ENCODE measurements at regions of chr20 and their contacts with region 1.

Region 1: DNA sequence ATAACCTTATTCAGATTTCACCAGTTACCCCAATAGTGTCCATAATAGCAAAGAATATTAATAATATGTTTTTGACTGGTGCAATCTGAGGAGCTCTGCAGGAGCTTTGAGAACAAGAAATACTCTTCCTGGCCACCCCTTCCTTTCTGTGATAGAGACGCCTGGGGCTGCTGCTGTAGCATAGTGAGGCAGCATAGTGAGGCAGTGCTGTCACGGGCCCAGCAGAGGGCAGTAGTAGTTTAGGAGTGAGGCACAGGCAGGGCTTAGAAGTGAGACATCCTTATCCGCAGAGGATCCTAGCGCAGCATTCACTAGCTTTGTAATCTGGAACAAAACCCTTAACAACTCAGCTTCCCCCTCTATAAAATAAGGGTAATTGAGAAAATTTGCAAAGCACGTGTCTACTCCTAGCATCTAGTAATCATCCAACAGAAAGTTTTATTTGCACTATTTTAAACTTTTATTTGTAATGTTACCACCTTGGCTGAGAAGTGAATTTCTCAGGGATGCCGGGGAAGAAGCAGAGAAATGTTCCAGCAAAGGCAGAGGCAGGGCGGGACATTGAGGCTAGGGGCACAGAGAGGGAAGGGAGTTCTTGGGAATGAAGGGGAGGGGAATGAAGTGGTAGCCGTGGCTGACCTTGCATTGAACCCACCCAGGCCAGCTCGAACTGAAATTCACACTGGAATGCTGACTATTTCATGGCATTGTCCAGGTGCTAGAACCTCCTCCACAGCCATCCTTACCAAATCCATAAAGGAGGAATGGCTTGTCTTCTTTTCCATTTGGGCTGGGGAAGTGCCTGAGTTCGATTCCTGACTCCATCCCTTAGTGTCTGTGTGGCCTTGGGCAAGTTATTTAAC is 78.8 kb downstream of the CDS2 start:
- DNase-seq: peak; percentile 49 to 82
- ATAC-seq: peak; percentile 97 to 100 (median 100)
- H3K4me3 ChIP-seq: no peak overlapping the region
- H3K4me3 Mint-ChIP-seq: no peak overlapping the region
- H3K27ac ChIP-seq: no peak overlapping the region
- H3K27ac Mint-ChIP-seq: no peak overlapping the region
- H3K4me1 ChIP-seq: no peaks in the 10 kb centered on the region
- H3K4me1 Mint-ChIP-seq: peaks cover 0 to 4% of the 10 kb centered on the region in 2 donors
- H3K27me3 ChIP-seq: no peaks in the 10 kb centered on the region
- H3K27me3 Mint-ChIP-seq: no peaks in the 10 kb centered on the region
- CTCF ChIP-seq: peak; percentile 95

Region 2: GRCh38 chr20:3854462-3854871 is 1351.1 kb before region 1 on chr20:
- intact Hi-C with region 1: no loop called
- DNase-seq: no peak
- ATAC-seq: no peak
- H3K4me3 ChIP-seq: no peak overlapping the region
- H3K4me3 Mint-ChIP-seq: no peak overlapping the region
- H3K27ac ChIP-seq: no peak overlapping the region
- H3K27ac Mint-ChIP-seq: no peak overlapping the region
- H3K4me1 ChIP-seq: no peaks in the 10 kb centered on the region
- H3K4me1 Mint-ChIP-seq: peaks cover 15 to 16% of the 10 kb centered on the region in 2 donors
- H3K27me3 ChIP-seq: no peaks in the 10 kb centered on the region
- H3K27me3 Mint-ChIP-seq: no peaks in the 10 kb centered on the region
- CTCF ChIP-seq: no peak

Region 3: DNA sequence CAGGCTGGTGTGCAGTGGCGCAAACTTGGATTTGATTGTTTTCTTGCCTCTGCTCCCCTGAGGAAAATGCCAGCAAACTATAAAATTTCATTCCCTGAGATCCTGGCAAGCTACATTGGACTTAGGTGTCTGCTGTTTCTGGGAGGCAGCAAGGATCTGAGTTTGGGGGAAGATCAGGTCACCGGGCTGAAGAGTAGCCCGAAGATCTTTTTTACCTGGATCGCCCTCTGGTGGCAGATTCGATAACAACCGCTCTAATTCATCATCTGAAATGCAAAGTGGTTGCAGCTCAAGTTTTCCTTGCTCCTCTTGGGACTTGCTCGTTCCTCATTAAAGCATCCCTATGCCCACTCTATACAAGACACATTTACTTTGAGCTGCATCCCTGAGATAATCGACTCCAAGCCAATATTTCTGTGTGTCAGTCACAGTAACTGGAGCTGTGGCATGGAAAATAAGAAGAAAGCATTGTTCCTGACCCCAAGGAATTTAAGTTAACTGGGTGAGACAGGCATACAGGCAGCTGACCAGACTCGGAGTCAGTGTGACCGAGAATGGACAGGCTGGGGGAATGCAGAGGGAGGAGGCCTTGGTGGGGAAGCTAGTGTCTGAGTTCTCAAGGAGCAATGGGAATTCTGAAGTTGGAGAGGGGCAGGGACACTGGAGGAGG is 243.0 kb after region 1 on chr20:
- intact Hi-C with region 1: loop called (anchors 1 kb)
- DNase-seq: peak; percentile 45 to 64
- ATAC-seq: peak in 1 of 3 donors; percentile 67
- H3K4me3 ChIP-seq: no peak overlapping the region
- H3K4me3 Mint-ChIP-seq: no peak overlapping the region
- H3K27ac ChIP-seq: no peak overlapping the region
- H3K27ac Mint-ChIP-seq: no peak overlapping the region
- H3K4me1 ChIP-seq: no peaks in the 10 kb centered on the region
- H3K4me1 Mint-ChIP-seq: no peaks in the 10 kb centered on the region
- H3K27me3 ChIP-seq: no peaks in the 10 kb centered on the region
- H3K27me3 Mint-ChIP-seq: peaks cover 3 to 39% of the 10 kb centered on the region in 2 donors
- CTCF ChIP-seq: peak; percentile 85

Measured in natural killer cell (primary cell).